Naive thymus-derived CD4-positive, alpha-beta T cell (primary cell): ENCODE measurements at regions of chr16 and their contacts with region 1.

Region 1: DNA sequence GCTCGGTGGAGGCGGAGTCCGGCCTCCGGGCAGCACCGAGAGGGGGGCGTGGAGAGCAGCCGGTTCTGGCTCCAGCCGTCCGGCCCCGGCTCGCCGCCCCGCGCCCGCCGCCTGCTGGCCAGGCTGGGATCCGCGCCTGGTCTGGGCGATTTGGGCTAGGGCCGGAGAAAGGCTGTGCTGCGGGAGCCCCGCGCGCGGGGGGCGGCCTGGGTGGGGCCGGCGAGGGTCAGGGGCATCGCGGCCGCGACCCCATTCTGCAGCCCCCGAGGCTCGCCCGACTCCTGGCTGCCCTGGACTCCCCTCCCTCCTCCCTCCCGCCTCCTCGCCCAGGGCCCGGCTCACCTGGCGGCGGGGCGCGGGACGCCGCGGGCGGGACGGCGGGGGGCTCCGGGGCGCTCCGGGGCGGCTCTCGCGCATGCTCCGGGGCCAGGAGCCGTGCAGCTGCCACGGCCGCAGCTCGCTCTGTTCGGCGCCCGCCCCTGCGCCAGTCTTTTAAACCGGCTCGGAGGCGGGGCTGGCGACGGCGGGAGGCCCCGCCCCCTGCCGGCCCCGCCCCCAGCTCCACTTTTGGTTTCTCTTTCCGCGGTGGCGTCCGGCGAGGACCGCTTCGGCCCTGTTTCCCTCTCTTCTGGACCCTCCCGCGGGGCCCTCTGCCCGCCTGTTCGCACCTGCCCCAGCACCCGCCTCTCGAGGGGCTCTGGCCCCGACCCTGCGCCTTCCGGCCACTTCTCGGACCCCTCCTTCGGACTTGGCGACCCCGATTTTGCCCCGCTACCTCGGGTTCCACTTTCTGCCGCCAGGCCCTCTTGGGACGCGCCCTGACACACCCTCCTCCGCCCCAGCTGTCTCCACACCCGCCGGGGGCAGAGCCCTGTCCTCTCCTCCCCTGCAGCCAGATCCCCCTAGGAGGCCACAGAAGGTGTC is at the start of gene SOCS1:
- DNase-seq: peak; percentile 76 to 97 (median 87)
- ATAC-seq: peak; percentile 82
- H3K4me3 ChIP-seq: peak within 1 kb of the TSS; percentile 85
- H3K4me3 Mint-ChIP-seq: peak within 1 kb of the TSS; percentile 91 to 98 (median 94)
- H3K27ac ChIP-seq: peak within 1 kb of the TSS; percentile 97
- H3K27ac Mint-ChIP-seq: peak within 1 kb of the TSS; percentile 88 to 97 (median 96)
- H3K4me1 ChIP-seq: peaks cover 48 to 52% of the 10 kb centered on the region in 2 donors
- H3K4me1 Mint-ChIP-seq: peaks cover 19 to 64% (median 59%) of the 10 kb centered on the region in 7 donors
- H3K27me3 ChIP-seq: no peaks in the 10 kb centered on the region
- H3K27me3 Mint-ChIP-seq: peaks cover 0 to 4% (median 0%) of the 10 kb centered on the region in 5 donors
- total RNA-seq, gene SOCS1: 12.8 to 191 (median 46.8) TPM

Region 2: GRCh38 chr16:10964039-10964890 is 291.7 kb before region 1 on chr16:
- CTCF ChIA-PET with region 1: interaction called, 29 read pairs
- POLR2A ChIA-PET with region 1: interaction called, 7 read pairs
- intact Hi-C with region 1: loop called (anchors 1 to 2 kb)
- DNase-seq: peak; percentile 55 to 84 (median 69)
- ATAC-seq: peak; percentile 81
- H3K4me3 ChIP-seq: peak overlapping the region; percentile 3
- H3K4me3 Mint-ChIP-seq: peak overlapping the region in 6 of 10 donors; percentile 4 to 83 (median 52)
- H3K27ac ChIP-seq: no peak overlapping the region
- H3K27ac Mint-ChIP-seq: peak overlapping the region in 6 of 9 donors; percentile 47 to 91 (median 72)
- H3K4me1 ChIP-seq: peaks cover 11 to 18% of the 10 kb centered on the region in 2 donors
- H3K4me1 Mint-ChIP-seq: peaks cover 15 to 62% (median 28%) of the 10 kb centered on the region in 7 donors
- H3K27me3 ChIP-seq: no peaks in the 10 kb centered on the region
- H3K27me3 Mint-ChIP-seq: no peaks in the 10 kb centered on the region

Region 3: GRCh38 chr16:11139326-11140097 is 116.5 kb before region 1 on chr16:
- CTCF ChIA-PET with region 1: no interaction called
- POLR2A ChIA-PET with region 1: interaction called, 10 read pairs
- intact Hi-C with region 1: no loop called
- DNase-seq: no peak
- ATAC-seq: no peak
- H3K4me3 ChIP-seq: peak overlapping the region; percentile 11
- H3K4me3 Mint-ChIP-seq: peak overlapping the region; percentile 58 to 87 (median 84)
- H3K27ac ChIP-seq: no peak overlapping the region
- H3K27ac Mint-ChIP-seq: peak overlapping the region; percentile 18 to 87 (median 77)
- H3K4me1 ChIP-seq: peaks cover 0 to 37% of the 10 kb centered on the region in 2 donors
- H3K4me1 Mint-ChIP-seq: peaks cover 25 to 68% (median 58%) of the 10 kb centered on the region in 7 donors
- H3K27me3 ChIP-seq: no peaks in the 10 kb centered on the region
- H3K27me3 Mint-ChIP-seq: no peaks in the 10 kb centered on the region

Region 4: GRCh38 chr16:11312718-11313492 is 56.9 kb after region 1 on chr16:
- CTCF ChIA-PET with region 1: interaction called, 3 read pairs
- POLR2A ChIA-PET with region 1: interaction called, 14 read pairs
- intact Hi-C with region 1: loop called (anchors 1 kb)
- DNase-seq: peak in 2 of 9 donors; percentile 15 to 17
- ATAC-seq: peak; percentile 17
- H3K4me3 ChIP-seq: peak overlapping the region; percentile 23
- H3K4me3 Mint-ChIP-seq: peak overlapping the region; percentile 35 to 72 (median 58)
- H3K27ac ChIP-seq: no peak overlapping the region
- H3K27ac Mint-ChIP-seq: peak overlapping the region; percentile 11 to 91 (median 75)
- H3K4me1 ChIP-seq: peaks cover 23 to 34% of the 10 kb centered on the region in 2 donors
- H3K4me1 Mint-ChIP-seq: peaks cover 5 to 69% (median 31%) of the 10 kb centered on the region in 7 donors
- H3K27me3 ChIP-seq: no peaks in the 10 kb centered on the region
- H3K27me3 Mint-ChIP-seq: peaks cover 0 to 2% (median 0%) of the 10 kb centered on the region in 5 donors

Region 5: GRCh38 chr16:11515540-11516430 is 259.8 kb after region 1 on chr16:
- CTCF ChIA-PET with region 1: no interaction called
- POLR2A ChIA-PET with region 1: no interaction called
- intact Hi-C with region 1: no loop called
- DNase-seq: no peak
- ATAC-seq: no peak
- H3K4me3 ChIP-seq: no peak overlapping the region
- H3K4me3 Mint-ChIP-seq: no peak overlapping the region
- H3K27ac ChIP-seq: no peak overlapping the region
- H3K27ac Mint-ChIP-seq: no peak overlapping the region
- H3K4me1 ChIP-seq: no peaks in the 10 kb centered on the region
- H3K4me1 Mint-ChIP-seq: peaks cover 0 to 2% (median 0%) of the 10 kb centered on the region in 7 donors
- H3K27me3 ChIP-seq: no peaks in the 10 kb centered on the region
- H3K27me3 Mint-ChIP-seq: no peaks in the 10 kb centered on the region

Region 6: DNA sequence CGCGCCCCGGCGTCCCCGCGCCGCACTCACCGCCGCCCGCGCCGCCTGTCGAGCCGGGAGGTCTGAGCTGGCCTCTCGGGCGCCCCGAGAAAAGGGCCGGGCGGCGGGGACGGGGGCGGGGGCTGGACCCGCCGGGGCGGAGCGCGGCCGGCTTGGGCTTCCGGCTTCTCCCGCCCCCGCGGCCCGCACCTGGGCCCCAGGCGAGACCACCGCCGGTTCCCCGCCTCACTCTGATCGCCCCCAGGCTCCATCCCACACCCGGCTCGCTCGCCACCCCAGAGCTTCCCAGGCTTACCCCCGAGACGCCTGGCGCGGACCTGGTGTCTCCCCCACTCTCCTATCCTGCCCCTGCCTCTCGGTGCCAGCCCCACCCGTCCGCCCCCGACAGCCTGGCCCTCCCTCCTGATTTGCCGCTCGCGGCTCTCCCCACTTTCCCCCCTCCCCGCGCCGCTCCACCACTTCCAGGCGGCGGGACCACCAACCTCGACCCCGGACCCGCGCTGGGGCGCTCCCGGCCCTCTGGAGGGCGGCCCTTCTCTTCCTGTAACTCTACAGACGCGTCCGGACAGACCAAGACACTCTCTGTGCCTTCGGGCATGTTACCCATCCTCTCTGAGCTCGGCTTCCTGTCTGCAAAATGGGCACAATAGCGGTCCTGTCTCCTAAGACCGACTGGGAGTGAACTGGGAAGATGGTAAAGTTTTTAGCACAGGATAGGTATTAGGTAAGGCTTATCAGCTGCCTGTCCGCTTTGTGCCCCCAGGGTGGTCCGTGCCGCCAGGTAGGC is 331.1 kb after region 1 on chr16 and contains the start of gene LITAF:
- CTCF ChIA-PET with region 1: no interaction called
- POLR2A ChIA-PET with region 1: no interaction called
- intact Hi-C with region 1: loop called in 1 of 2 experiments (anchors 10 kb)
- DNase-seq: peak in 8 of 9 donors; percentile 52 to 75 (median 57)
- ATAC-seq: peak; percentile 71
- H3K4me3 ChIP-seq: peak within 1 kb of the TSS; percentile 88
- H3K4me3 Mint-ChIP-seq: peak within 1 kb of the TSS; percentile 91 to 100 (median 96)
- H3K27ac ChIP-seq: peak within 1 kb of the TSS; percentile 94
- H3K27ac Mint-ChIP-seq: peak within 1 kb of the TSS; percentile 90 to 99 (median 97)
- H3K4me1 ChIP-seq: peaks cover 32 to 38% of the 10 kb centered on the region in 2 donors
- H3K4me1 Mint-ChIP-seq: peaks cover 29 to 45% (median 37%) of the 10 kb centered on the region in 7 donors
- H3K27me3 ChIP-seq: no peaks in the 10 kb centered on the region
- H3K27me3 Mint-ChIP-seq: peaks cover 0 to 7% (median 0%) of the 10 kb centered on the region in 5 donors
- total RNA-seq, gene LITAF: 126 to 278 (median 208) TPM

Region 7: DNA sequence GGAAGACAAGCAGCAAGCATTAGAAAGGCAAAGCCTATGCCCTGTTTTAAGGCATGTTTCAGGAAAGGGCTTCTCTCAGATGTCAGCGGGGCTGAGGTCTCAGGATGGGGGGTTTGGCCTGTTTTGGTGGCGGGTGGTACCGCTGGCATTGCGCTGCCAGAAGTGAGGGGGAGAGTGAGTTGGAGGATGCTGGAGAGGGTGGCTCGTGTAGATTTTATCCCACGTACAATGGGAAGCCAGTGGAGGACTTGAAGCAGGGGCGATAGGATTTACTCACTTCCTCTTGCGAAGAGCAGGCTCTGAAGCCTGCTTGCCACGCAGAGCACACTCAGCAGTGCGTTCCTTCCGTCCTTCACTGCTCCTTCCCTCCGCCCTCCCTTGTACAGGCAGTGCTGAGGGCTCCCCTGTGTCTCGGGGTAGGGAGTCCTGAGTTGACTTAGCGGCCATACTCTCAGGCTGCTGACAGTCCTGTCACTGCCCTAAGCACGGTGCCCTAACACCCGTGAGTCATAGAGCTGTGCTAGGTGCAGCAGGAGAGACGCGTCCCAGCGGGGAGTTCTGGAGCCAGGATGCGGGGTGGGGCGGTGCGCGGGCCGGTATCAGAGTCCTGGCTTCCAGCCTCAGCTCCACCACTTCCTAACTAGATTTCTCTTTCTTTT is 833.6 kb after region 1 on chr16:
- CTCF ChIA-PET with region 1: no interaction called
- POLR2A ChIA-PET with region 1: no interaction called
- intact Hi-C with region 1: loop called in 1 of 2 experiments (anchors 10 kb)
- DNase-seq: peak; percentile 20 to 60 (median 49)
- ATAC-seq: peak; percentile 89
- H3K4me3 ChIP-seq: peak overlapping the region; percentile 71
- H3K4me3 Mint-ChIP-seq: peak overlapping the region; percentile 81 to 98 (median 86)
- H3K27ac ChIP-seq: peak overlapping the region; percentile 76
- H3K27ac Mint-ChIP-seq: peak overlapping the region; percentile 87 to 99 (median 97)
- H3K4me1 ChIP-seq: peaks cover 0 to 30% of the 10 kb centered on the region in 2 donors
- H3K4me1 Mint-ChIP-seq: peaks cover 25 to 63% (median 57%) of the 10 kb centered on the region in 7 donors
- H3K27me3 ChIP-seq: no peaks in the 10 kb centered on the region
- H3K27me3 Mint-ChIP-seq: no peaks in the 10 kb centered on the region

Region 8: GRCh38 chr16:13176711-13177110 is 1920.7 kb after region 1 on chr16:
- CTCF ChIA-PET with region 1: no interaction called
- POLR2A ChIA-PET with region 1: no interaction called
- intact Hi-C with region 1: no loop called
- DNase-seq: no peak
- ATAC-seq: no peak
- H3K4me3 ChIP-seq: no peak overlapping the region
- H3K4me3 Mint-ChIP-seq: no peak overlapping the region
- H3K27ac ChIP-seq: no peak overlapping the region
- H3K27ac Mint-ChIP-seq: no peak overlapping the region
- H3K4me1 ChIP-seq: no peaks in the 10 kb centered on the region
- H3K4me1 Mint-ChIP-seq: no peaks in the 10 kb centered on the region
- H3K27me3 ChIP-seq: no peaks in the 10 kb centered on the region
- H3K27me3 Mint-ChIP-seq: peaks cover 0 to 16% (median 7%) of the 10 kb centered on the region in 5 donors